AG04449 (cell line): ENCODE measurements at regions of chr6 and their contacts with region 1.

Region 1: DNA sequence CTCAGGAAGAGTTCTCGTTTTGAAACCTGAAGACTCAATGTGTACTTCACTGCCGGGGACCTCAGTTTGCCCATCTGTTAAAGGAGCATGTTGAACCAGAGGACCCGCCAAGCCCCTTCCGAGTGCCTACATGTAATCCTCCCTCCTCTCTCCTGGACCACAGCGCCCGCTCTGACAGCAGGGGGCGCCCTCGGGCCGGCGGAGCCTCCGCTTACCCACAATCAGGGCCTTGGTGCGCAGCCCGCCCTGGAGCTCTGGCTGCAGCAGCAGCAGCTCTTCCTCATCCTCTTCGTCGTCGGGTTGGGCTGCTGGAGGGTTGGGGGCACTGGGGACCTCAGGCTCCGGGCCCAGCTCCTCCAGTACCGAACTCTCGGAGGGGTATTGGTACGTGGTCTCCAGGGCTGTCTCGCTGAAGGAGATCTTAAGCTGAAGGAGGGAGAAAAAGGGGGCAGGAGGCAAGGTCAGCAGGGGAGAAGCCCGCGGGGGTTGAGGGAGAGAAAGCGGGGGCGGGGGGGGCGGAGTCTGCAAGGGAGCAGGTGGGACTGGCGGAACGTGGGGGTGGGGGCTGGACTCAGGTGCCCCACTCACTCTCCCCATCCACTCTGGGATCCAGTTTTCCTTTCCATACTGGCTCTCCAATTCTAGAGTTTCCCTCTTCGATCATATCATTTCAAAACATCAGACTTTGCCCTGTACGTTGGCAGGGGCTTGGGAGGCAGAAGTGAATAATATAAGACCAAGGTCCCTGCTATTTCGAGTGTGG is 6.3 kb upstream of the DHX16 start:
- DNase-seq: no peak
- H3K4me3 ChIP-seq: peak overlapping the region; percentile 35
- CTCF ChIP-seq: peak; percentile 94

Region 2: GRCh38 chr6:30664994-30665767 is 14.0 kb before region 1 on chr6:
- CTCF ChIA-PET with region 1: interaction called, 19 read pairs
- POLR2A ChIA-PET with region 1: no interaction called
- DNase-seq: no peak
- H3K4me3 ChIP-seq: no peak overlapping the region
- CTCF ChIP-seq: no peak

Region 3: DNA sequence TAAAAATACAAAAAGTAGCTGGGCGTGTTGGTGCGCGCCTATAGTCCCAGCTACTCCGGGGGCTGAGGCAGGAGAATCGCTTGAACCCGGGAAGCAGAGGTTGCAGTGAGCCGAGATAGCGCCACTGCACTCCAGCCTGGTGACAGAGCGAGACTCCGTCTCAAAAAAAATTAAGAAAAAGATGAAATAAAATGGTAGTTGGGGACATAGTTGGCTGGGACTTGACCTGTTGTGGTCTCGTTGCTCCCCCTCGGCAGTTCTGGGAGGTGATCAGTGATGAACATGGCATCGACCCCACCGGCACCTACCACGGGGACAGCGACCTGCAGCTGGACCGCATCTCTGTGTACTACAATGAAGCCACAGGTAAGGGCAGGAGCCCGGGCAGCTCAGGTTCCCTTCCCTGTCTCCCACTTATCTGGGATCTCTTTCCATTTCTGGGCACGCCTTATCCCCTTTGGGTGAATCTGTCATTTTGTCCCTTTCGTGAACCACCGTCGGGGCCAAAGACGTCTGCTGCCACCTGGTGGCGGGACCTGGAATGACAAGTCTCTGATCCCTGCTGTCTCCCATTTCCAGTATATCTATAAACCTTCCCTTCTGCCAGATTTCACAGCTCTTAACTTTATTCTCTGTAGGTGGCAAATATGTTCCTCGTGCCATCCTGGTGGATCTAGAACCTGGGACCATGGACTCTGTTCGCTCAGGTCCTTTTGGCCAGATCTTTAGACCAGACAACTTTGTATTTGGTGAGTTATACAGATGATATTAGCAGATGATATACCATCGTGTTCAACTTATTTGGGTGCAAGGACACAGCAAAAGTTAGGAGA is 43.4 kb after region 1 on chr6:
- CTCF ChIA-PET with region 1: interaction called, 504 read pairs
- POLR2A ChIA-PET with region 1: interaction called, 24 read pairs
- DNase-seq: no peak
- H3K4me3 ChIP-seq: peak overlapping the region; percentile 97
- CTCF ChIP-seq: peak; percentile 83